Activated CD4-positive, alpha-beta T cell treated with anti-CD3 and anti-CD28 coated beads, Interleukin-2, amount 10 ng/mL, durations not matched to agents 24 days and 14 days (primary cell): ENCODE measurements at regions of chr12 and their contacts with region 1.

Region 1: GRCh38 chr12:65556681-65557437 is 267.4 kb upstream of the HMGA2 start:
- DNase-seq: peak; percentile 88
- H3K4me3 Mint-ChIP-seq: no peak overlapping the region
- H3K27ac Mint-ChIP-seq: no peak overlapping the region
- H3K4me1 Mint-ChIP-seq: peaks cover 3% of the 10 kb centered on the region
- H3K27me3 Mint-ChIP-seq: peaks cover 2% of the 10 kb centered on the region

Region 2: GRCh38 chr12:65685514-65685913 is 128.7 kb after region 1 on chr12:
- intact Hi-C with region 1: loop called (anchors 2 kb)
- DNase-seq: no peak
- H3K4me3 Mint-ChIP-seq: no peak overlapping the region
- H3K27ac Mint-ChIP-seq: no peak overlapping the region
- H3K4me1 Mint-ChIP-seq: no peaks in the 10 kb centered on the region
- H3K27me3 Mint-ChIP-seq: no peaks in the 10 kb centered on the region

Region 3: DNA sequence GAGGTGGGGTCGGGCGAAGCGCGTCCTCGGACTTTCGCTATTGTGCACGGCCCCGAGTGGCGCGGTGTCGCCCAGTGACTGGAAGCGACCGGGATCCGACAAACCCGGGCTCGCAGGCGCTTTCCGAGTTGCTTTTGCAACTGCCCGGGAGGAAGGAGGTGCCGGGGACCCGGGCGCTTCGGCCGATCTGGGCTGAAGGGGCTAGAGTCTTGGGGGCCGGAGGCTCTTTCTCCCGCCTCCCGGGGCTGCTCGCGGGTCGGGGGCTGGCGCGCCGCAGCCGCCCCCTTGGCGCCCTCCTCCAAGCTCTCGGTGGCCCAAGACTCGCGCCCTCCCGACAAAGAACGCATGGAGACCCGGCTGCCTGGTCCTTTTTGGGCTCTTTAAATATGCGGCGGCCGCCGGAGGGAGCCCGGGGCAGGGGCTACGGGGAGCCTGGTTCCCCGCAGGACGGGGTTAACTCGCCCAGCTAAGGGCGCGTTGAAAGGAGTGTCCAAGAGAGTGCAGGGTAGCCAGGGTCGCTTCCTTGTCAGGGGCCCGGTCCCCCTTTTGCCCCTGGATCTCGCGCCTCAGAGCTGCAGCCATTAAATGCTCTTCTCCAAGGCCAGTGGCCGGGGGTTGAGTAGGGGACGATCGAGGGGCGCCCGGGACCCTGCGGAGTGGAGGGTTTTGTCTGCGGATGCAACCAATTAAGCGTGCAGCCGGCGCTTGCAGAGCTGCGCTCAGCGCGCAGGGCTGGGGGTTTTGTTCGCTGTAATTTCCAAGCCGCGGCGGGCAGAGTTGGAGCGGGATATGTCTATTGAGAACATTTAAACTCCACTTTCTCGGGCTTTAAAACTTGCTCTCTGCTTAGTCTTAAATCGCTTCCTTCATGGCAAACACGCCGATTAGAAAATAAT is 269.0 kb after region 1 on chr12:
- intact Hi-C with region 1: loop called (anchors 5 kb)
- DNase-seq: peak; percentile 61
- H3K4me3 Mint-ChIP-seq: peak overlapping the region; percentile 26
- H3K27ac Mint-ChIP-seq: no peak overlapping the region
- H3K4me1 Mint-ChIP-seq: peaks cover 7% of the 10 kb centered on the region
- H3K27me3 Mint-ChIP-seq: peaks cover 72% of the 10 kb centered on the region

Region 4: GRCh38 chr12:65986047-65986446 is 429.2 kb after region 1 on chr12:
- intact Hi-C with region 1: loop called (anchors 1 kb)
- DNase-seq: no peak
- H3K4me3 Mint-ChIP-seq: no peak overlapping the region
- H3K27ac Mint-ChIP-seq: no peak overlapping the region
- H3K4me1 Mint-ChIP-seq: no peaks in the 10 kb centered on the region
- H3K27me3 Mint-ChIP-seq: peaks cover 10% of the 10 kb centered on the region

Region 5: DNA sequence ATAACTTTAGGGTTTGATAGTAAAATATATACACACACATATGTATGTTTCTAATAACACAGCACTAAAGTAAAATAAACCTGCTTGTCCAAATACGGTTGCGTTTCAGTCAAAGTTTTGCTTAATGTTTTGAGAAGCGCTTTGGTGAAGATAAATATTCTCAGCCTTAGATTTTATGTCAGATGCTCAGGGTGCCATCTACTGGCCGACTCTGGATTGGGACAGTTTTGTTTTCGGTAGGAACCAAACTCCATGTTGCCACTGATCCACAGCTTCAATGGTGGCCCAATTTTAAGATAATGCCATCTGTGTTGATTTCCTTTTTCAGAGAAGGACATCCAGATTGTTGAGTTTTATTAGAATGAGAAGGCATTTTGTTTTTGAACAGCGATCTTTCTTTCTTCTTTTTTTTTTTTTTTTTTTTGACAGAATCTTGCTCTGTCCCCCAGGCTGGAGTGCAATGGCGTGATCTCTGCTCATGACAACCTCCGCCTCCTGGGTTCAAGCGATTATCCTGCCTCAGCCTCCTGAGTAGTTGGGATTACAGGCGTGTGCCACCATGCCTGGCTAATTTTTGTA is 530.6 kb after region 1 on chr12:
- intact Hi-C with region 1: loop called (anchors 1 kb)
- DNase-seq: peak; percentile 83
- H3K4me3 Mint-ChIP-seq: no peak overlapping the region
- H3K27ac Mint-ChIP-seq: no peak overlapping the region
- H3K4me1 Mint-ChIP-seq: no peaks in the 10 kb centered on the region
- H3K27me3 Mint-ChIP-seq: peaks cover 13% of the 10 kb centered on the region

Region 6: DNA sequence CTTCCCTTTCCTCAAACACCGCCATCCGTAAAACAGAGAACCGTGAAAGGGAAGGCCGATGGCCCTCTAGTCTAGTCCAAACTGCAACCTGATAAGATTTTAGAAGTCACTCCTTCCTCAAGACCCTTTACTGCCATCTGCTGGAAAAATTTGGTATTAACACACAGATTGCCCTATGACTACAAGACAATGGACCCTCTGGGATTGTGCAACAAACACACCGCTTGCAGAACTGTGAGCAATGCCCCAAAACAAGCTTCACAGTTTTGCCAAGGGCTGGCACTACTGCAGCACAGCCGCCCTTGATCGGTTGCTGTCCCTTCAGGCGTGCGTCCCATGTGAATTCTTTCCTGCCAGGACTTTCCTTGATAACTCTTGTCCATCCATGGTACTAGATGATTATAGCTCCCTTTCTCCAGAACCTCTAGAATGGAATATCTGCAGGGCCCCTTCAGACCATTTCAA is 550.6 kb after region 1 on chr12:
- intact Hi-C with region 1: loop called (anchors 5 kb)
- DNase-seq: peak; percentile 92
- H3K4me3 Mint-ChIP-seq: no peak overlapping the region
- H3K27ac Mint-ChIP-seq: no peak overlapping the region
- H3K4me1 Mint-ChIP-seq: peaks cover 8% of the 10 kb centered on the region
- H3K27me3 Mint-ChIP-seq: peaks cover 14% of the 10 kb centered on the region